Pancreas (tissue), 10 donors: ENCODE measurements at regions of chr15 and their contacts with region 1.

Region 1: DNA sequence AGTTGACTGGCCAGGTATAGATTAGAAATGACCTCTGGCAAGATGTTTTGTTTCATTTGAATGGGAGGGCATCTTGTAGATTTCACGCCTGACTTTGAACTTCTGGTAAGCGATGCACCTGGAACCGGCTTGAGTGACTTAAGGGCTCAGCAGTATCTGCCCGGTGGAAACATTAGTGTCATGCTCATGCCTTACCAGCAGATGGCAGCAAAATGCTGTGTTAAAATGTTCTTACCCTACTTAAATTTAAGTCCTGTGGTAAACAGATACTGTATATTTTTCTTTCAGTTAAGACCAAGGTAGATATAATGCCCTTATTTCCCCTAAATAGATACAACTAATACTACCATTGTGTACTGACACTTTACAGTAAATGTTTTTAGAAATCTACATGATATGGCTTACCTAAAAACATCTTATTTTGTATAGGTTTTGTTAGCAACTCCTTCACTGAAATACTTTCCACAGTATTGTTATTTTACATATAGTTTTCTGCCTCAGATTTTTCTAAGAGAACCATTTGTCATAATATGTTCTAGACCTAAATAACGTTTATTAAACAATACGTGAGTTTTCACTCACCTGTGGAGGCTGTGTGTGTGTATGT is 25.5 kb downstream of the ASB7 start:
- DNase-seq: peak in 4 of 6 donors; percentile 32 to 78 (median 42)
- ATAC-seq: peak; percentile 89 to 99 (median 94)
- H3K4me3 ChIP-seq: no peak overlapping the region
- H3K27ac ChIP-seq: no peak overlapping the region
- H3K4me1 ChIP-seq: no peaks in the 10 kb centered on the region
- H3K27me3 ChIP-seq: no peaks in the 10 kb centered on the region
- CTCF ChIP-seq: peak; percentile 72 to 78 (median 74)

Region 2: DNA sequence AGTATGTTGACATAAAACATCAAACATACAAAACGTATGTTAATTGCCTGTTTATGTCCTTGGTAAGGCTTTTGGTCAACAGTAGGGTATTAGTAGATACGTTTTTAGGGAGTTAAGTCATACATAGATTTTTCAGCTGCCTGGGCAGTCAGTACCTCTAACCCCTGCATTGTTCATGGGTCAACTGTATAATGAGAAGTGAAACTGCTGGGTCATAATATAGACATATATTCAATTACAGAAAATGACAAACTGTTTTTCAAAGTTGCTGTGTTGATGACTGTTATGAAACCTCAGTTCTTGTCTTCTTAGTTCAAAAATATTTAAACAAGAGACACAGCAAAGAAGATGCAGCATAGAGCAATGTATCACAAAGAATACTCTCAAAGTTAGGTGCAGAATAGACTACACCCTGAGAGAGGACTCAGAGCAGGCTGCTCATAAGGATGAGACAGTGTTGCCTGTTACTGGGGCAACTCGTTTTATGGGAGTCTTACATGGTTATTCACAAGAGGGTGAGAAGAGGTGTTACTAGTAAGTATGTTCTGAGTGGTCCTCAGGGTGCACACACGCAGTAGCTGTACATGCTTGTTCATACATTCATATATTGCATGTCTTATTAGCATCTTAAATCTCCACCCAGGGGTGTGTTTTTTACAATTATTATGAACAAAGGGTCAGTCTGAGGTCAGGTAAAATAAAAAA is 233.0 kb before region 1 on chr15:
- intact Hi-C with region 1: no loop called
- DNase-seq: no peak
- ATAC-seq: no peak
- H3K4me3 ChIP-seq: no peak overlapping the region
- H3K27ac ChIP-seq: no peak overlapping the region
- H3K4me1 ChIP-seq: no peaks in the 10 kb centered on the region
- H3K27me3 ChIP-seq: no peaks in the 10 kb centered on the region
- CTCF ChIP-seq: no peak

Region 3: DNA sequence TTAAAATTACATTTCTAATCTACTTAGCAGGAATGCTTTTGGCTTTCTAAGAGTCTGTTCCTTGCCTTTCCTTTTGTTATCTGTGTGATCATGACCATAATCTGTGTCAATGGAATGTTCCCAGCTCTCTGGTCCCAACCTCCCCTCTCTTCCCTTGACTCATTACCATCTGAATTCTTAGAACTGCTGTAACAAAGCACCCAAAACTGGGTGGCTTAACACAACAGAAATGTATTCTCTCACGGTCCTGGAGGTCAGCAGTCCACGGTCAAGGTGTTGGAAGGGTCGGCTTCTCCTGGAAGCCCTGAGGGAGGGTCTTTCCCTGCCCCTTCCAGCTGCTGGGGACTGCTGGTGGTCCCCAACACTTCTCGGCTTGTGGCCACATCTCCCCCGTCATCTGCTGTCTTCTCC is 372.4 kb after region 1 on chr15:
- intact Hi-C with region 1: loop called in 2 of 3 experiments (anchors 5 kb)
- DNase-seq: peak in 1 of 6 donors; percentile 5
- ATAC-seq: no peak
- H3K4me3 ChIP-seq: no peak overlapping the region
- H3K27ac ChIP-seq: no peak overlapping the region
- H3K4me1 ChIP-seq: no peaks in the 10 kb centered on the region
- H3K27me3 ChIP-seq: no peaks in the 10 kb centered on the region
- CTCF ChIP-seq: no peak